Activated CD4-positive, alpha-beta T cell treated with anti-CD3 and anti-CD28 coated beads, Interleukin-2, amount 10 ng/mL, durations not matched to agents 7 days and 5 days (primary cell): ENCODE measurements at regions of chr11 and their contacts with region 1.

Region 1: DNA sequence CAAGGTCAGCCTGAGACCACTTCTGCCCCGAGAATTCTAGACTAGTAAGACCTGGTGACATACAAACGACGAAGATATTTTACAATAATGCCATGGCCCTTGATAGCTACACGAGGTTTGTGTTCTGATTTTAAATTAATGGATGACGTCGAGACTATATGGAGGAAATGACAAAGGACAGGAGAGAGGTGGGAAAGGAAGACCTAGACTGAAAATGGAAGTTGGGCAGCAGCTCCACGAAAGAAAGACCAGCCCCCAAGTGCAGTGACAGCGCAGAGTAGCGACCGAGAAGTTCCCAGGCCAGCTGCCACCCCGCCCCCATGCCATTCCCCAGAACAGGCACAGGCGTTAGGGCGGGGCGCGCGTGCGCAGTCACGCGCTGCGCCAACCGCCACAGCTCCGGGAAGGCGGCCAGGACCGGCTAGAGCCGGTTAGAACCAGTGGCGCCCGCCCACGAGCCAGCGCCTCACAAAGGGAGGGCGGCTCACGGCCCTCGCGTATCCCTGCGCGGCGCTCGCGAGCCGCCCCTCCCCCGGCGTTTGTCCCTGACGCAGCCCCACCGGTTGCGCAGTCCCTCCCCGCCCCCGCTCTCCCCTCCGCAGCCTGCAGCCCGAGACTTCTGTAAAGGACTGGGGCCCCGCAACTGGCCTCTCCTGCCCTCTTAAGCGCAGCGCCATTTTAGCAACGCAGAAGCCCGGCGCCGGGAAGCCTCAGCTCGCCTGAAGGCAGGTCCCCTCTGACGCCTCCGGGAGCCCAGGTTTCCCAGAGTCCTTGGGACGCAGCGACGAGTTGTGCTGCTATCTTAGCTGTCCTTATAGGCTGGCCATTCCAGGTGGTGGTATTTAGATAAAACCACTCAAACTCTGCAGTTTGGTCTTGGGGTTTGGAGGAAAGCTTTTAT is 1.5 kb upstream of the MALAT1 start:
- DNase-seq: peak; percentile 97
- H3K4me3 Mint-ChIP-seq: no peak overlapping the region
- H3K27ac Mint-ChIP-seq: no peak overlapping the region
- H3K4me1 Mint-ChIP-seq: peaks cover 36% of the 10 kb centered on the region
- H3K27me3 Mint-ChIP-seq: peaks cover 1% of the 10 kb centered on the region

Region 2: DNA sequence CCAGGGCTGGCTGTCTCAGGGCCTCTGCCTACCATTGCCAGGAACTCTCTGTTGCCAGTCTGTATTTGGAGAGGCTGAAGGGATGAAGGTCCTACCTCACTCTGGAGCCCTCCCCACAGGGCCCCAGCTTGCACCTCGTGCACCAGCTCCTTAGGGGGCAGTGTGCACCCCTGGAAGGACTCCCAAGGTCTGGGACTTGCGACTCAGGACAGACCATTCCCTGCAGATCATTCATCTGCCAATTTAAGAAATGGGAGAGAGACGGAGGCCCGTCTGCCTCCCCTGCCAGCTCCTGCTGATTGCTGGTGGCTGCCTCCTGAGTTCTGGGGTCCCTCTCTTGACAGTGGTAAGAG is 26.0 kb before region 1 on chr11:
- CTCF ChIA-PET with region 1: interaction called, 119 read pairs
- POLR2A ChIA-PET with region 1: interaction called, 24 read pairs
- DNase-seq: no peak
- H3K4me3 Mint-ChIP-seq: no peak overlapping the region
- H3K27ac Mint-ChIP-seq: peak overlapping the region; percentile 89
- H3K4me1 Mint-ChIP-seq: peaks cover 36% of the 10 kb centered on the region
- H3K27me3 Mint-ChIP-seq: no peaks in the 10 kb centered on the region

Region 3: GRCh38 chr11:65477149-65477965 is 20.0 kb before region 1 on chr11:
- CTCF ChIA-PET with region 1: interaction called, 119 read pairs
- POLR2A ChIA-PET with region 1: interaction called, 24 read pairs
- DNase-seq: peak; percentile 88
- H3K4me3 Mint-ChIP-seq: peak overlapping the region; percentile 88
- H3K27ac Mint-ChIP-seq: peak overlapping the region; percentile 99
- H3K4me1 Mint-ChIP-seq: peaks cover 25% of the 10 kb centered on the region
- H3K27me3 Mint-ChIP-seq: peaks cover 4% of the 10 kb centered on the region

Region 4: GRCh38 chr11:65524741-65525545 is 27.6 kb after region 1 on chr11 and contains the start of gene SCYL1:
- CTCF ChIA-PET with region 1: no interaction called
- POLR2A ChIA-PET with region 1: interaction called, 12 read pairs
- DNase-seq: peak; percentile 78
- H3K4me3 Mint-ChIP-seq: peak within 1 kb of the TSS; percentile 81
- H3K27ac Mint-ChIP-seq: peak within 1 kb of the TSS; percentile 92
- H3K4me1 Mint-ChIP-seq: peaks cover 63% of the 10 kb centered on the region
- H3K27me3 Mint-ChIP-seq: no peaks in the 10 kb centered on the region
- total RNA-seq, gene SCYL1: 59.1 to 62.1 TPM